ENCODE measurements at regions of chr9 and their contacts with region 1.

Region 1: DNA sequence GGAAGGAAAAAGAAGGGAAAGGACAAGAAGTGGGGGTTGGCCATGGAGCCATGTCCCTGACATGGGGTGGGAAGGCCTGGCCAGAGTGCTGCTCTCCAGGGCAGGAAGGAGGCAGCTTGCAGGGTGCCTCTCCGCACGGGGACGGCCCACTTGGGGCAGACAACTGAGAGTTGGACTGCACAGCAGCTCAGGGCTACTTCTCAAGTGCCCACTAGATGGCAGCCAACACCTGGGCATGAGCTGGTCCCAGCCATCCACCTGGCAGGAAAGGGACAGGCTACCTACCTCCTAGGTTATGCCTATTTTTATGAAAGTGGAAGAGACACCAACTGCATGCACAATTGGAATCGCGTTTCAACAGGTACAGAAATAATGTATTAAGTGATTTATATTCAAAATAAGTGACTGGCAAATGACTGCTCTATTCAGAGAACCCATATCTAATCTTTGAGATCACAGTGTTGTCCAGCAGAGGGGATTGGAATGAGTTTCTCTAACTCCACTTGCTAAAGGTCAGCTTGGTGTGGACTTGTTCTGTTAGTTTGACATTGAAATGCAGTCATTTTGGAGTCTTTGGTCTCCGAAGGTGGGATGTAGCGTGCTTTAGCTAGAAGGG is 113.4 kb downstream of the SYK start:
- DNase-seq: peak; percentile 33
- ATAC-seq: peak; percentile 99
- H3K4me3 ChIP-seq: no peak overlapping the region
- H3K27ac ChIP-seq: no peak overlapping the region
- H3K4me1 ChIP-seq: no peaks in the 10 kb centered on the region; the same call in 1 of the 2 replicates
- H3K27me3 ChIP-seq: no peaks in the 10 kb centered on the region; a peak in 1 of 4 replicates
- CTCF ChIP-seq: peak; percentile 81 to 92 (median 90)
- EP300 ChIP-seq: no peak
- POLR2A ChIP-seq: no peak
- RAD21 ChIP-seq: peak; percentile 93

Region 2: GRCh38 chr9:90539286-90539685 is 375.7 kb before region 1 on chr9:
- CTCF ChIA-PET with region 1: no interaction called
- POLR2A ChIA-PET with region 1: no interaction called
- RAD21 ChIA-PET with region 1: no interaction called
- SMC1A ChIA-PET with region 1: no interaction called
- in situ Hi-C with region 1: no loop called
- intact Hi-C with region 1: no loop called
- DNase-seq: no peak
- ATAC-seq: no peak
- H3K4me3 ChIP-seq: no peak overlapping the region
- H3K27ac ChIP-seq: no peak overlapping the region
- H3K4me1 ChIP-seq: no peaks in the 10 kb centered on the region
- H3K27me3 ChIP-seq: peaks cover 0 to 6% of the 10 kb centered on the region in 2 experiments; a peak in 1 of 4 replicates
- CTCF ChIP-seq: no peak
- EP300 ChIP-seq: no peak
- POLR2A ChIP-seq: no peak
- RAD21 ChIP-seq: no peak

Region 3: DNA sequence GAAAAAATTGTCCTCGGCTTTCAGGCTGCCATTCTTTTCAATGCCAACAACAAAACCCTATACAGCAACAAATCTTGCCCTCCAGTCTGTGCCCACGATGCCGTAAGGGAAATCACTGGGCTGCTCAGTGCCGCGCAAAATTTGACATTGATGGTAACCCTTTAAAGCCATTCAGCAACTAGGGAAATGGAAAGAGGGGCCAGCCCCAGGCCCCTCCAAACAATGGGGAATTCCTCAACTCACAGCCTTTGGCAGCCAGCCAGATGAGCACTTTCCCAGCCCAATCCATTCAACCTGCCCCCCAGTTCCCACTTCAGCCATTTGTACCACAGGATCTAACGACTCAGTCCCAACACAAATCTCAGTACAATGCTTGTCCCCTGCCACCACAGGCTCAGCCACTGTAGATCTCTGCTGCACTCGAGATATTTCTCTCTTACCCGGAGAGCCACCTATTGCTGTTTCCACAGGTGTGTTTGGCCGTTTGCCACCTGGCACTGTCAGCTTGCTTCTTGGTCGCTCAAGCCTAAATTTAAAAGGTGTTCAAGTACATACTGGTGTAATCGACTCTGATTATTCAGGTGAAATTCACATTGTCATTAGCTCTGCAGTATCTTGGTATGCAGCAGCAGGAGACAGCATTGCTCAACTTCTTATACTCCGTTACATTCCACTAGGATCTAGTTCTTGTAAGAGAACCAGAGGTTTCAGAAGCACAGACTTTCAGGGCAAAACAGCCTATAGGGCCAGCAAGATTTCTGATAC is 10.1 kb before region 1 on chr9:
- CTCF ChIA-PET with region 1: interaction called, 11 read pairs
- POLR2A ChIA-PET with region 1: no interaction called
- RAD21 ChIA-PET with region 1: no interaction called
- SMC1A ChIA-PET with region 1: interaction called, 5 read pairs
- in situ Hi-C with region 1: no loop called
- intact Hi-C with region 1: no loop called
- DNase-seq: no peak
- ATAC-seq: no peak
- H3K4me3 ChIP-seq: no peak overlapping the region
- H3K27ac ChIP-seq: no peak overlapping the region
- H3K4me1 ChIP-seq: peaks cover 8% of the 10 kb centered on the region
- H3K27me3 ChIP-seq: no peaks in the 10 kb centered on the region; a peak in 1 of 4 replicates
- CTCF ChIP-seq: no peak
- EP300 ChIP-seq: no peak
- POLR2A ChIP-seq: no peak
- RAD21 ChIP-seq: no peak

Region 4: DNA sequence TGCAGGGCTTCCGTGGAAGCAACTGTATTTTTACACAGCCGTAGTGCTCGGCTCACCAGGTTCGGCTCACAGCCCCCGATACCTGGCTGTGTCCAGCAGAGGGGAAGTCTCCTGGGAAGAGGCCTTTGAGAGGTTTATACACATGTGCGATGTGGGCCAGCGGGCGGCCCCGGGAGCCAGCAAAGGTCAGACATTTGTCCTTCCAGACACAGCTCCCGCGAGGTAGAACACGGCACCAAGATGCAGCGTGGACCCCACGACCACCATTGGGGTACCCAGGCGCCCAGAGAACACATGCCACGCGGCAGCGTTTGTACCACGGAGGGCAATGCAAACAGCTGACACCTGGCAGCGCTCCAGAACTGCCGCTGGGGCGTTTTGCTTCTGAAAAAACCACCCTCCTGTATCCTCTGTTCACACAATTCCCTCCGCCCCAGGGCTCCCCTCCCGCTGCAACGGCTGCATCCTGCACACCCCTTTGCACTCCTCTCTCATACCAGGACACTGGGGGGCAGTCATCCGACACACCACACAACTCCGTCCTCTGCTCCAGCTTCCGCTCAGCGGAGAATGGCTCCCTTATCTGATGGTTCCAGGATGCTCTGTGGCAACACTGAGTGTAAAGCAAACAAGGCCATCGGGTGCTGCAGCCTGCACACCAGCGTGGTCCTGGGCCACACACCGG is 122.0 kb after region 1 on chr9:
- CTCF ChIA-PET with region 1: interaction called, 28 read pairs
- POLR2A ChIA-PET with region 1: no interaction called
- RAD21 ChIA-PET with region 1: interaction called, 6 read pairs
- SMC1A ChIA-PET with region 1: interaction called, 5 read pairs
- in situ Hi-C with region 1: no loop called
- intact Hi-C with region 1: loop called (anchors 5 kb)
- DNase-seq: no peak
- ATAC-seq: peak; percentile 73
- H3K4me3 ChIP-seq: no peak overlapping the region
- H3K27ac ChIP-seq: no peak overlapping the region
- H3K4me1 ChIP-seq: peaks cover 30% of the 10 kb centered on the region
- H3K27me3 ChIP-seq: no peaks in the 10 kb centered on the region; a peak in 2 of 4 replicates
- CTCF ChIP-seq: peak in 2 of 3 experiments; percentile 25 to 41; a peak in 3 of 6 replicates
- EP300 ChIP-seq: no peak
- POLR2A ChIP-seq: no peak
- RAD21 ChIP-seq: peak; percentile 61

Region 5: GRCh38 chr9:91253488-91253887 is 338.5 kb after region 1 on chr9:
- CTCF ChIA-PET with region 1: interaction called, 5 read pairs
- POLR2A ChIA-PET with region 1: no interaction called
- RAD21 ChIA-PET with region 1: no interaction called
- SMC1A ChIA-PET with region 1: no interaction called
- in situ Hi-C with region 1: no loop called
- intact Hi-C with region 1: loop called (anchors 1 kb)
- DNase-seq: no peak
- ATAC-seq: peak; percentile 42; the same call in 1 of the 3 replicates
- H3K4me3 ChIP-seq: no peak overlapping the region
- H3K27ac ChIP-seq: no peak overlapping the region
- H3K4me1 ChIP-seq: no peaks in the 10 kb centered on the region
- H3K27me3 ChIP-seq: no peaks in the 10 kb centered on the region; a peak in 1 of 4 replicates
- CTCF ChIP-seq: no peak
- EP300 ChIP-seq: no peak
- POLR2A ChIP-seq: no peak
- RAD21 ChIP-seq: peak; percentile 33; the same call in 1 of the 2 replicates

Region 6: GRCh38 chr9:91433180-91433579 is 518.2 kb after region 1 on chr9:
- CTCF ChIA-PET with region 1: interaction called, 115 read pairs
- POLR2A ChIA-PET with region 1: no interaction called
- RAD21 ChIA-PET with region 1: interaction called, 59 read pairs
- SMC1A ChIA-PET with region 1: interaction called, 4 read pairs
- in situ Hi-C with region 1: loop called (anchors 5 kb)
- intact Hi-C with region 1: no loop called
- DNase-seq: no peak
- ATAC-seq: no peak
- H3K4me3 ChIP-seq: no peak overlapping the region
- H3K27ac ChIP-seq: no peak overlapping the region
- H3K4me1 ChIP-seq: no peaks in the 10 kb centered on the region
- H3K27me3 ChIP-seq: peaks cover 0 to 3% of the 10 kb centered on the region in 2 experiments; a peak in 1 of 4 replicates
- CTCF ChIP-seq: peak in 2 of 3 experiments; percentile 12 to 40; a peak in 2 of 6 replicates
- EP300 ChIP-seq: no peak
- POLR2A ChIP-seq: no peak
- RAD21 ChIP-seq: peak; percentile 30; the same call in 1 of the 2 replicates

Region 7: GRCh38 chr9:91681461-91682305 is 766.7 kb after region 1 on chr9:
- CTCF ChIA-PET with region 1: interaction called, 14 read pairs
- POLR2A ChIA-PET with region 1: no interaction called
- RAD21 ChIA-PET with region 1: interaction called, 3 read pairs
- SMC1A ChIA-PET with region 1: no interaction called
- in situ Hi-C with region 1: loop called (anchors 5 kb)
- intact Hi-C with region 1: loop called (anchors 1 kb)
- DNase-seq: no peak
- ATAC-seq: peak; percentile 98
- H3K4me3 ChIP-seq: no peak overlapping the region
- H3K27ac ChIP-seq: no peak overlapping the region
- H3K4me1 ChIP-seq: peaks cover 5% of the 10 kb centered on the region; the same call in 1 of the 2 replicates
- H3K27me3 ChIP-seq: no peaks in the 10 kb centered on the region
- CTCF ChIP-seq: peak; percentile 78 to 88 (median 79)
- EP300 ChIP-seq: no peak
- POLR2A ChIP-seq: no peak
- RAD21 ChIP-seq: peak; percentile 66

Region 8: GRCh38 chr9:91734371-91734981 is 819.5 kb after region 1 on chr9:
- CTCF ChIA-PET with region 1: interaction called, 5 read pairs
- POLR2A ChIA-PET with region 1: no interaction called
- RAD21 ChIA-PET with region 1: no interaction called
- SMC1A ChIA-PET with region 1: no interaction called
- in situ Hi-C with region 1: loop called (anchors 5 kb)
- intact Hi-C with region 1: no loop called
- DNase-seq: no peak
- ATAC-seq: peak; percentile 83
- H3K4me3 ChIP-seq: no peak overlapping the region
- H3K27ac ChIP-seq: no peak overlapping the region
- H3K4me1 ChIP-seq: no peaks in the 10 kb centered on the region
- H3K27me3 ChIP-seq: peaks cover 0 to 3% of the 10 kb centered on the region in 2 experiments; a peak in 2 of 4 replicates
- CTCF ChIP-seq: peak; percentile 87 to 97 (median 97)
- EP300 ChIP-seq: no peak
- POLR2A ChIP-seq: no peak
- RAD21 ChIP-seq: peak; percentile 41

Measured in GM12878 (cell line).